IMR-90 (cell line): ENCODE measurements at regions of chr4 and their contacts with region 1.

Region 1: DNA sequence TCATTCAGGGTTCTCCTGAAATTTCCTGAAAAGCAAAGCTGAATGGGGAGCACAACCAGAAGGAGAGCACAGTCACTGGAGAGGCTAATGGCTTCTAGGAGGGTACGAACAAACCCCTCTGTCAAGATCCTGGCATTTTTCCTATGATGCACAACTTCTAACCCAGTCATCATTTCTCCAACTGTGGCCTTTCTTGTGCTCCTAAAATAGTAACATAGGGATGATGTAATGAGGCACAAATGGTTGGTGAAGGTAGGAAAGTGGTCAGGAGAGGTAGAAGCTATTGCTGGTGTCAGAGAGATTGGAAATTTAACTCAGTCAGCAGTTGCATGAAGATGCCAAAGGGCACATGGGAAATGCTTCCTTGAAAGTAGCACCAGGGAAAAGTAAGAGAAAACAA is 52.7 kb downstream of the SLC10A7 start:
- DNase-seq: peak; percentile 9
- ATAC-seq: no peak
- H3K4me3 ChIP-seq: no peak overlapping the region
- H3K27ac ChIP-seq: no peak overlapping the region
- H3K4me1 ChIP-seq: no peaks in the 10 kb centered on the region; the same call in 1 of the 2 replicates
- H3K27me3 ChIP-seq: no peaks in the 10 kb centered on the region
- CTCF ChIP-seq: no peak
- POLR2A ChIP-seq: no peak
- RAD21 ChIP-seq: no peak

Region 2: GRCh38 chr4:146175541-146176453 is 293.2 kb before region 1 on chr4 and contains the start of gene LSM6:
- CTCF ChIA-PET with region 1: no interaction called
- POLR2A ChIA-PET with region 1: no interaction called
- dilution Hi-C with region 1: no loop called
- in situ Hi-C with region 1: no loop called
- intact Hi-C with region 1: no loop called
- DNase-seq: peak; percentile 85
- ATAC-seq: peak; percentile 96
- H3K4me3 ChIP-seq: peak within 1 kb of the TSS; percentile 60
- H3K27ac ChIP-seq: peak within 1 kb of the TSS; percentile 53
- H3K4me1 ChIP-seq: peaks cover 3% of the 10 kb centered on the region; the same call in 1 of the 2 replicates
- H3K27me3 ChIP-seq: no peaks in the 10 kb centered on the region
- CTCF ChIP-seq: 0 out of 2 replicates have a peak, but pooled peaks have one; percentile 5
- POLR2A ChIP-seq: no peak
- RAD21 ChIP-seq: no peak
- total RNA-seq, gene LSM6: 13.4 and 33.1 TPM in 2 replicates

Region 3: DNA sequence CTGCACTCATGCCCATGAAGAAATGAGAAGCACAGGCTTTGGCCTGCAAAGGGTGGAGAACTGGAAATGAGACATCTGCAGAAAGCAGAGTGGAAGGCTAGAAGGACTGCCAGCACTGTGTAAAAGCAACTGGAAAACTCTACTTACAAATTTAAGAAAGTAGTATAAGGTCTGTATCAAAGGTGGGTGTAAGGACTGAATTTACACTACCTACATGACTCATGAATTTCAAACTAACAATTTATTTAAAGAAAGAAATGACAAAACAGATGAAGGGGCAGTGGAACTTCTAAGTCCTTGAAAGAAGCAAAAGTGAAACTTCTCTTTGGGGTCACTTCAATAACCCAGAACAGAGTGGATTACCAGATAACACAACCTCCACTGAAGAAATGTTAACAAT is 18.5 kb before region 1 on chr4:
- CTCF ChIA-PET with region 1: no interaction called
- POLR2A ChIA-PET with region 1: no interaction called
- dilution Hi-C with region 1: no loop called
- in situ Hi-C with region 1: no loop called
- intact Hi-C with region 1: loop called (anchors 2 kb)
- DNase-seq: peak; percentile 29
- ATAC-seq: peak; percentile 84
- H3K4me3 ChIP-seq: no peak overlapping the region
- H3K27ac ChIP-seq: peak overlapping the region; percentile 44; the same call in 1 of the 2 replicates
- H3K4me1 ChIP-seq: no peaks in the 10 kb centered on the region
- H3K27me3 ChIP-seq: no peaks in the 10 kb centered on the region
- CTCF ChIP-seq: no peak
- POLR2A ChIP-seq: no peak
- RAD21 ChIP-seq: no peak